Lower lobe of right lung (tissue), 2 donors: ENCODE measurements at regions of chr14 and their contacts with region 1.

Region 1: GRCh38 chr14:69600304-69600891 is 11.0 kb upstream of the SUSD6 start:
- DNase-seq: no peak
- ATAC-seq: no peak
- H3K4me3 ChIP-seq: no peak overlapping the region
- H3K27ac ChIP-seq: no peak overlapping the region
- H3K4me1 ChIP-seq: no peaks in the 10 kb centered on the region
- H3K27me3 ChIP-seq: no peaks in the 10 kb centered on the region
- CTCF ChIP-seq: no peak

Region 2: DNA sequence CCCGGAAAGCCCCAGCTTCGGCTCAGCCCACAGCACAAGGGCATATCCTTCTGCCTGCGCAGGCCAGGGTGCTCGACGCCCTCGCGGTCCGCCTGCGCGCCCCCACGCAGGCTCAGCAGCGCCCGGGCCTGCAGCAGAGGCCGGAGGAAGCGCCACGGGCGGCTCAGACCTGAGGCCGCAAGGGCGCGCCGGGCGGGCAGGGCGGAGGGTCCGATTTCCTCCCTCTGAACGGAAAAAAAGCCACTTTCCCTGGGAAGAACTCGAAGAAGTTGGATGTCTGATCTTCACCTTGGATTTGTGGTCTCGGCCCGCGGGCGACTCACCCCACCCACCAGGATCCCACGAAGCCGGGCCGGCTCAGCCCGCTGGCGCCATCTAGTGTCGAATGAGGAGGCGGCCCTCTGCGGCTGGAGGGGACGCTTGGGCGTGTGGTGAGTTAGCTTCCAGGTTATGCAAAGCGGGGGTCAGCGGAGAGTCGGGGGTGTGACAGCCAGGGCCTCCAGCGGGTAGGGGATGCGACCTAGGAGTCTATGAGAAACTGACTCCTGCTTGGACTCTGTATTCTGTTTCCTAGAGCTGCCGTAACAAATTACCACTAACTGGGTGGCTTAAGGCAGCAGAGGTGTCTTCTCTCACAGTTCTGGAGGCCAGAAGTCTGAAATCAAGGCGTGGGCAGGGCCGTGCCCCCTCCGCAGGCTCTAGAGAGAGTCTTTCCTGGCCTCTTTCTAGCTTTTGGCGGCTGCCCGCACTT is 126.5 kb after region 1 on chr14:
- intact Hi-C with region 1: loop called (anchors 5 kb)
- DNase-seq: peak; percentile 90
- ATAC-seq: peak; percentile 96
- H3K4me3 ChIP-seq: peak overlapping the region; percentile 56
- H3K27ac ChIP-seq: peak overlapping the region; percentile 78
- H3K4me1 ChIP-seq: peaks cover 35% of the 10 kb centered on the region
- H3K27me3 ChIP-seq: no peaks in the 10 kb centered on the region
- CTCF ChIP-seq: peak; percentile 99